IMR-90 (cell line): ENCODE measurements at regions of chr2 and their contacts with region 1.

Region 1: GRCh38 chr2:212892193-212892592 is 259.2 kb downstream of the IKZF2 start:
- DNase-seq: peak; percentile 64
- ATAC-seq: peak; percentile 69
- H3K4me3 ChIP-seq: no peak overlapping the region
- H3K27ac ChIP-seq: no peak overlapping the region
- H3K4me1 ChIP-seq: no peaks in the 10 kb centered on the region
- H3K27me3 ChIP-seq: no peaks in the 10 kb centered on the region
- CTCF ChIP-seq: peak; percentile 54
- POLR2A ChIP-seq: no peak
- RAD21 ChIP-seq: peak; percentile 61

Region 2: GRCh38 chr2:212686285-212686895 is 205.8 kb before region 1 on chr2:
- CTCF ChIA-PET with region 1: interaction called, 5 read pairs
- POLR2A ChIA-PET with region 1: no interaction called
- dilution Hi-C with region 1: no loop called
- in situ Hi-C with region 1: loop called (anchors 10 kb)
- intact Hi-C with region 1: loop called (anchors 1 kb)
- DNase-seq: peak; percentile 73
- ATAC-seq: peak; percentile 82
- H3K4me3 ChIP-seq: no peak overlapping the region
- H3K27ac ChIP-seq: no peak overlapping the region
- H3K4me1 ChIP-seq: peaks cover 3% of the 10 kb centered on the region
- H3K27me3 ChIP-seq: no peaks in the 10 kb centered on the region
- CTCF ChIP-seq: peak; percentile 97
- POLR2A ChIP-seq: 0 out of 2 replicates have a peak, but pooled peaks have one; percentile 34
- RAD21 ChIP-seq: peak; percentile 94

Region 3: DNA sequence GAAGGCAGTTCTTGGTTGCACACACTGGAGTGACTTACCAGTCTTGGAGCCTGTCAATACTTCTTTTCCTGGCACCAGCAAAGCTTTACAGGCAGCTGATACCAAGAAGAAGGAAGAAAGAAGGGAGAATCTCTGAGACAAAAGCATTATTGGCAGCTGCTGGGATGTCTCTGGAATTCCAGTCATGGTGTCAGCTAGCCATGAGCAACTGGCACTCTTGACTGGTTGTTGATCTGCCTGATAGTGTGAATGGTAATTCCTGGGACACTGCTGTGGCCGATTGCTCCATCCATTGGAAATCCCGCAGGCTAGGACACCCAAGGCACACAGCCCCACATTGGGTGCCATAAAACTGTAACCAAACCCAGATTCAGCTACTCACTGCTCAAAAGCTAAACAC is 374.2 kb after region 1 on chr2:
- CTCF ChIA-PET with region 1: no interaction called
- POLR2A ChIA-PET with region 1: no interaction called
- dilution Hi-C with region 1: no loop called
- in situ Hi-C with region 1: no loop called
- intact Hi-C with region 1: no loop called
- DNase-seq: no peak
- ATAC-seq: no peak
- H3K4me3 ChIP-seq: no peak overlapping the region
- H3K27ac ChIP-seq: no peak overlapping the region
- H3K4me1 ChIP-seq: no peaks in the 10 kb centered on the region
- H3K27me3 ChIP-seq: no peaks in the 10 kb centered on the region
- CTCF ChIP-seq: no peak
- POLR2A ChIP-seq: no peak
- RAD21 ChIP-seq: no peak